HepG2 (cell line): ENCODE measurements at regions of chr21 and their contacts with region 1.

Region 1: GRCh38 chr21:29499734-29500343 is 201.1 kb downstream of the BACH1 start:
- DNase-seq: peak; percentile 50
- ATAC-seq: peak; percentile 98
- H3K4me3 ChIP-seq: no peak overlapping the region
- H3K27ac ChIP-seq: no peak overlapping the region
- H3K4me1 ChIP-seq: no peaks in the 10 kb centered on the region
- H3K27me3 ChIP-seq: no peaks in the 10 kb centered on the region
- CTCF ChIP-seq: peak; percentile 62
- EP300 ChIP-seq: no peak
- POLR2A ChIP-seq: no peak
- RAD21 ChIP-seq: peak; percentile 60; the same call in 1 of the 2 replicates

Region 2: GRCh38 chr21:29462479-29462878 is 37.4 kb before region 1 on chr21:
- CTCF ChIA-PET with region 1: no interaction called
- POLR2A ChIA-PET with region 1: no interaction called
- in situ Hi-C with region 1: no loop called
- intact Hi-C with region 1: no loop called
- DNase-seq: no peak
- ATAC-seq: no peak
- H3K4me3 ChIP-seq: no peak overlapping the region
- H3K27ac ChIP-seq: no peak overlapping the region
- H3K4me1 ChIP-seq: no peaks in the 10 kb centered on the region
- H3K27me3 ChIP-seq: no peaks in the 10 kb centered on the region
- CTCF ChIP-seq: no peak
- EP300 ChIP-seq: no peak
- POLR2A ChIP-seq: no peak
- RAD21 ChIP-seq: no peak

Region 3: DNA sequence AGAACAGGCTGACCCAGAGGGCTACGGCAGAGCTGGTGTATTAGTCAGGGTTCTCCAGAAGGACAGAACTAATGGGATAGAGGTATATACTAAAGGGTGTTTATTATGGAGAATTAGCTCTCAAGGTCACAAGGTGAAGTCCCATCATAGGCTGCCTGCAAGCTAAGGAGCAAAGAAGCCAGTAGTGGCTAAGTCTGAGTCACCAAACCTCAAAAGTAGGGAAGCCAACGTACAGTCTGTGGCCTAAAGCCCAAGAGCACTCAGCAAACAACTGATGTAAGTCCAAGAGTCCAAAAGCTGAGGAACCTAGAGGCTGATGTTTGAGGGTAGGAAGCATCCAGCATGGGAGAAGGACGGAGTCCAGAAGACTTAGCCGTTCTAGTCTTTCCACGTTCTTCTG is 21.9 kb before region 1 on chr21:
- CTCF ChIA-PET with region 1: interaction called, 11 read pairs
- POLR2A ChIA-PET with region 1: no interaction called
- in situ Hi-C with region 1: no loop called
- intact Hi-C with region 1: loop called (anchors 2 kb)
- DNase-seq: no peak
- ATAC-seq: no peak
- H3K4me3 ChIP-seq: no peak overlapping the region
- H3K27ac ChIP-seq: no peak overlapping the region
- H3K4me1 ChIP-seq: peaks cover 21% of the 10 kb centered on the region
- H3K27me3 ChIP-seq: no peaks in the 10 kb centered on the region
- CTCF ChIP-seq: no peak
- EP300 ChIP-seq: no peak
- POLR2A ChIP-seq: no peak
- RAD21 ChIP-seq: no peak

Region 4: DNA sequence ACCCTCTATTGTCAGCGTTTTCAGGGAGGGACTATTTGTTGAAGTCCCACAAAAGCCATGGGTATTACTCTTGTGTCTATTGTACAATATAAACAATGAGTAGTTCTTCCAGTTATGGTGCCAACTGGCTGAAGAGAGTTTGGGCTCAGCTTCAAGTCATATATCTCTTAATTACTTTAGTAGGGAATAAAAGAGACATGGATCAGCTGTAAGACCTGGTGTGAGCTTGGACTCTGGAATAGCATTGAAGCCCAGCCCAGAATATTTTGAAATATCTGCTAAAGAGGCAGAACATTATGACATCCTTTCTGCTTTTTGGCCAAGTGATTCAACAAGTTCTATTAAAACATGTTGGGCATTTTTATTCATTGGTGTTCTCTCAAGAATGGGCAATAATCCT is 23.8 kb after region 1 on chr21:
- CTCF ChIA-PET with region 1: no interaction called
- POLR2A ChIA-PET with region 1: no interaction called
- in situ Hi-C with region 1: no loop called
- intact Hi-C with region 1: no loop called
- DNase-seq: no peak
- ATAC-seq: no peak
- H3K4me3 ChIP-seq: no peak overlapping the region
- H3K27ac ChIP-seq: no peak overlapping the region
- H3K4me1 ChIP-seq: no peaks in the 10 kb centered on the region
- H3K27me3 ChIP-seq: no peaks in the 10 kb centered on the region
- CTCF ChIP-seq: no peak
- EP300 ChIP-seq: no peak
- POLR2A ChIP-seq: no peak
- RAD21 ChIP-seq: no peak

Region 5: DNA sequence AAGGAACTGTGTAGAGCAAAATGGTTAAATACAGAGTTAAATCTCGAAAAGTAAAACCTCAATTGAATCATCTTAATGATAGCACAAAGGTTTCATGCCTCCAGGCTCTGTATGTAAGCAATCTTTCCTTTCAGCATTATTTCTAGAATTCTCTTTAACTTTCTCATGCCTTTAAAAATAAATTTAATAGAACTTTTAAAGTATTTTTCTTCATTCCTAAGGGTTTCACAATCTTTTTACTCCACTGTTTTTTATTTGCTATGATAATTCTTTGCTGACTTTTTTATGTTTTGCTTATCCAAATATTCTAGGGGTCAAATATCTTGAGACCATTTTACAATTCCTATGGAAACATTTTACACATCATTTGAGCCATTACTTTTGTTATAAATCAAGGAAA is 86.9 kb after region 1 on chr21:
- CTCF ChIA-PET with region 1: no interaction called
- POLR2A ChIA-PET with region 1: no interaction called
- in situ Hi-C with region 1: no loop called
- intact Hi-C with region 1: no loop called
- DNase-seq: no peak
- ATAC-seq: no peak
- H3K4me3 ChIP-seq: no peak overlapping the region
- H3K27ac ChIP-seq: no peak overlapping the region
- H3K4me1 ChIP-seq: peaks cover under 1% of the 10 kb centered on the region; the same call in 1 of the 2 replicates
- H3K27me3 ChIP-seq: no peaks in the 10 kb centered on the region
- CTCF ChIP-seq: no peak
- EP300 ChIP-seq: no peak
- POLR2A ChIP-seq: no peak
- RAD21 ChIP-seq: no peak

Region 6: GRCh38 chr21:29677326-29677725 is 177.5 kb after region 1 on chr21:
- CTCF ChIA-PET with region 1: no interaction called
- POLR2A ChIA-PET with region 1: no interaction called
- in situ Hi-C with region 1: no loop called
- intact Hi-C with region 1: no loop called
- DNase-seq: no peak
- ATAC-seq: no peak
- H3K4me3 ChIP-seq: no peak overlapping the region
- H3K27ac ChIP-seq: no peak overlapping the region
- H3K4me1 ChIP-seq: no peaks in the 10 kb centered on the region
- H3K27me3 ChIP-seq: no peaks in the 10 kb centered on the region
- CTCF ChIP-seq: no peak
- EP300 ChIP-seq: no peak
- POLR2A ChIP-seq: no peak
- RAD21 ChIP-seq: no peak